ENCODE measurements at regions of chr6 and their contacts with region 1.

Region 1: DNA sequence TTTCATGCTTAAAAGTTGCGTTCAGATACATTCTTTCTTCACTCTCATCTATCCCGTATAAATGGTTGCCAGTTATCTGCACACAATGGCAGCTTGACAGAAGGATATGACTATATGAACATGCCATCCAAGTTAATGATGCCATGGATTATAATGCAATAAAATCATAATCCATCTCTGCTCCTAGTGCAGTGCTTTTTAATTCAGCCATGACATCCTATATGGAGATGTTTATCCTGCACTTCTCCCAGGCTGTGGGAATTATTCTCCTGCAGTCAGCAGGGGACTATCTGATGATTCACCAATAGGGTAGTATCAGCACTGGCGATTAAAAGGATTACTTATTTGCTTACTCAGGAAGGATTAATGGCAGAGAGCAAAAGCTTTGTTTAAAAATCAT is 273.8 kb downstream of the SAMD5 start:
- DNase-seq: peak; percentile 93
- H3K4me3 ChIP-seq: no peak overlapping the region
- H3K27ac ChIP-seq: peak overlapping the region; percentile 38
- H3K4me1 ChIP-seq: peaks cover 53% of the 10 kb centered on the region
- H3K27me3 ChIP-seq: no peaks in the 10 kb centered on the region
- CTCF ChIP-seq: no peak

Region 2: GRCh38 chr6:147675281-147675680 is 107.0 kb before region 1 on chr6:
- CTCF ChIA-PET with region 1: no interaction called
- POLR2A ChIA-PET with region 1: no interaction called
- intact Hi-C with region 1: loop called (anchors 5 kb)
- DNase-seq: no peak
- H3K4me3 ChIP-seq: no peak overlapping the region
- H3K27ac ChIP-seq: no peak overlapping the region
- H3K4me1 ChIP-seq: peaks cover 41% of the 10 kb centered on the region
- H3K27me3 ChIP-seq: no peaks in the 10 kb centered on the region
- CTCF ChIP-seq: no peak

Region 3: DNA sequence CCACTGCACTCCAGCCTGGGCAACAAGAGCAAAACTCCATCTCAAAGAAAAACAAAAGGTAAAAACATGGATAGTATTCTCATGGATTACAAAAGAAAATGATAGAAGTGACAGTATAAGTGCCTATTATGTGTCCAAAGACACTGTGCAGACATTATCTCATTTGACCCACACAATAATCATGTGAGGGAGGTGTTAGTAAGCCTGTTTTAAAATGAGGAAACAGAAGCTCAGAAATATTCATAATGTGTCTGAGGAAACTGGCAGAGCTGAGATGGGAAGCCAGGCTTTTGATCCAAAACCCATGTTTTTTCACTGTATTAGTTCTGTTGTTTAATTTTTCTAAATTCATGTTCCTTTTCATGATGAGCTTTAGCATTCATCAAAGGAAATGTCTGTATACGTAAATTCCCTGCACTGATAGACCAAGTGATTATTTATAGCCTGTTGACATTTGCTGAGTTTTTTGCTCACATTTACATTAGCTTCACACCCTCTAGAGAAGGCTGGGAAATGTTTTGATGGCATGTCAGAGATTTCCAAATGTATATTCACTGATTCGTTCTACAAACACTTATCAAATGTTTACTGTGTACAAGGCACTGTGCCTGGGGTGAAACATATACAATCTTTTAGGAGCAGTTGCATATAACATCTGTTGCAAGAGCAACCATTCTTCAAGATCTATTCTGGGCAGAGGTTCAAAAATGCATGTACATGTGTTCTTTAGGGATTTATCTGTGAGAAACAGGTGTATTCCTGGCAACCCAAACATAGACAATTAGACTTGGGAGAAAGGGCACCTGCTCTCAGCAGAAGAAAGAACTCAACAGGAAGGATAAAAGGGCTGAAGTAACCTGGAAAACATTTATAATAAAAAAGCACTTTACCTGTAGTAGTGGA is 57.7 kb after region 1 on chr6:
- CTCF ChIA-PET with region 1: no interaction called
- POLR2A ChIA-PET with region 1: no interaction called
- intact Hi-C with region 1: no loop called
- DNase-seq: no peak
- H3K4me3 ChIP-seq: no peak overlapping the region
- H3K27ac ChIP-seq: no peak overlapping the region
- H3K4me1 ChIP-seq: no peaks in the 10 kb centered on the region
- H3K27me3 ChIP-seq: no peaks in the 10 kb centered on the region
- CTCF ChIP-seq: no peak

Region 4: DNA sequence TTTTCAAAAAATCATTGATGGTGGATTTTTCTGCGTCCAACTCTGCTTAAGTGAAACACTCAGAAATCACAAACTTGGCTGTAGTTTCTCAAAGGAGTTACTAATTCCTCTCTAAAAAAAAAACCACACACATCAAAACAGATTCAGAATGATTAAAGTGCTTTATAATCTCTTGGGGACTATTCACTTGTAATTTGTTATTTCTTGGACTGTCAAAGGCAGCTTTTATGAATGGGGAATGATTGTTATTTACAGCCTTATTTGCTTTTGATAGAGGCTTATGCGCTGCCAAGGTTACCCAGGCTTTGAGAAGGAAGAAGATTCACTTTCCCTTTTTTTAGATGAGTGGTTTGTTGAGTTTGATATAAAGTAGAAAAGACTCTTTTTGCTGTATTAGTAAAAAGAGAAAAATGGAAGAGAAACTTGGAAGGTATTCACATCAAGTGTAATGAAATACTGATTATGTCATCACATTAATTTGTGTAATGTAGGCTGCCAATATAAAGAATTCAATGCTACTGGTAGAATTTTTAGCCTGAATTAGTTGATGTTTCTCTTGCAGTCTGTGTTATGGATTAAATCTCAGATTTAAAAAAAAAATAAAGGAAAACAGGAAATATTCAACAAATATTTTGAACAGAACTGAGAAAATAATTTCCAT is 179.3 kb after region 1 on chr6:
- CTCF ChIA-PET with region 1: no interaction called
- POLR2A ChIA-PET with region 1: no interaction called
- intact Hi-C with region 1: loop called (anchors 10 kb)
- DNase-seq: peak; percentile 77
- H3K4me3 ChIP-seq: no peak overlapping the region
- H3K27ac ChIP-seq: no peak overlapping the region
- H3K4me1 ChIP-seq: peaks cover 16% of the 10 kb centered on the region
- H3K27me3 ChIP-seq: no peaks in the 10 kb centered on the region
- CTCF ChIP-seq: no peak

Region 5: GRCh38 chr6:148166339-148166968 is 384.2 kb after region 1 on chr6:
- CTCF ChIA-PET with region 1: no interaction called
- POLR2A ChIA-PET with region 1: no interaction called
- intact Hi-C with region 1: loop called (anchors 10 kb)
- DNase-seq: peak; percentile 77
- H3K4me3 ChIP-seq: no peak overlapping the region
- H3K27ac ChIP-seq: no peak overlapping the region
- H3K4me1 ChIP-seq: no peaks in the 10 kb centered on the region
- H3K27me3 ChIP-seq: no peaks in the 10 kb centered on the region
- CTCF ChIP-seq: peak; percentile 77

Region 6: GRCh38 chr6:148425443-148425842 is 643.1 kb after region 1 on chr6:
- CTCF ChIA-PET with region 1: no interaction called
- POLR2A ChIA-PET with region 1: interaction called, 21 read pairs
- intact Hi-C with region 1: no loop called
- DNase-seq: no peak
- H3K4me3 ChIP-seq: no peak overlapping the region
- H3K27ac ChIP-seq: no peak overlapping the region
- H3K4me1 ChIP-seq: peaks cover 29% of the 10 kb centered on the region
- H3K27me3 ChIP-seq: no peaks in the 10 kb centered on the region
- CTCF ChIP-seq: no peak

Measured in A673 (cell line).